ENCODE measurements at regions of chr2 and their contacts with region 1.

Region 1: GRCh38 chr2:230614913-230615332 is 97.7 kb upstream of the CAB39 start:
- DNase-seq: no peak
- H3K4me3 ChIP-seq: no peak overlapping the region
- H3K27ac ChIP-seq: no peak overlapping the region
- H3K4me1 ChIP-seq: peaks cover 0 to 4% (median 2%) of the 10 kb centered on the region in 4 donors
- H3K27me3 ChIP-seq: no peaks in the 10 kb centered on the region
- CTCF ChIP-seq: no peak
- EP300 ChIP-seq: no peak
- POLR2A ChIP-seq: no peak

Region 2: DNA sequence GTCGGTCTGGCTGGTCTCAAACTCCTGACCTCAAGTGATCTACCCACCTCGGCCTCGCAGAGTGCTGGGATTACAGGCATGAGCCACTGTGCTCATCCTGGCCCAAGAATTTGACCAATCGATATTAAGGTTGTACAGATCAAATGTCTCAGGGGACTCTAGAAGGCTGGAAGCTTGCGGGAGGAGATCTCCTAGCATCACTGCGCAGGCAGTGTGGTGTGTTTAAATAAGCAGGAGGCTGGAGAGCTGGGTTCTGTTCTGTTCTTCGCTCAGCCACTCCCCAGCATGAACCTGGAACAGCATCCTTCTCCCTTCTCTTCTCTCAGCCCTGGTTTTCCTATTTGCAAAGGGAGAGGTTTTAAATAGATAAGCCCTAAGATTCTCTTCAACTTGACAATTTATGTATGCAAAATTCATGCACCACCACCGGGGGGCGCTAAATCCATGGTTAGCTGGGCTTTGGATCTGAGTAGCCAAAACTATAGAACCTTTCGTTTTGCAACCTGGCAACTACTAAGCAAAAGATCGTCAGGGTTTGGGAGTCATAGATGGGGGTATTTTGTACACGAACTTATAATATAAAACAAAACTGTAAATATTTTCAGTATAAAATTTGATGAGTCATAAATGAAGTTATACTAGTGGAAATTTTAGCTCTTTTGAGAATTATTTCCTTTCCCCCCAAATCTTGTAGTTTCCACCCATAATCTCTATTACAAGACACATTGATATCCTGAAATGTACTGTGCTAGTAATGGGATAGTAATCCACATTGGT is 606.8 kb before region 1 on chr2:
- intact Hi-C with region 1: loop called (anchors 5 kb)
- DNase-seq: peak; percentile 82
- H3K4me3 ChIP-seq: no peak overlapping the region
- H3K27ac ChIP-seq: no peak overlapping the region
- H3K4me1 ChIP-seq: peaks cover 0 to 22% (median 14%) of the 10 kb centered on the region in 4 donors
- H3K27me3 ChIP-seq: no peaks in the 10 kb centered on the region
- CTCF ChIP-seq: peak; percentile 30 to 81 (median 68)
- EP300 ChIP-seq: no peak
- POLR2A ChIP-seq: no peak